Endothelial cell of umbilical vein (primary cell): ENCODE measurements at regions of chr3 and their contacts with region 1.

Region 1: DNA sequence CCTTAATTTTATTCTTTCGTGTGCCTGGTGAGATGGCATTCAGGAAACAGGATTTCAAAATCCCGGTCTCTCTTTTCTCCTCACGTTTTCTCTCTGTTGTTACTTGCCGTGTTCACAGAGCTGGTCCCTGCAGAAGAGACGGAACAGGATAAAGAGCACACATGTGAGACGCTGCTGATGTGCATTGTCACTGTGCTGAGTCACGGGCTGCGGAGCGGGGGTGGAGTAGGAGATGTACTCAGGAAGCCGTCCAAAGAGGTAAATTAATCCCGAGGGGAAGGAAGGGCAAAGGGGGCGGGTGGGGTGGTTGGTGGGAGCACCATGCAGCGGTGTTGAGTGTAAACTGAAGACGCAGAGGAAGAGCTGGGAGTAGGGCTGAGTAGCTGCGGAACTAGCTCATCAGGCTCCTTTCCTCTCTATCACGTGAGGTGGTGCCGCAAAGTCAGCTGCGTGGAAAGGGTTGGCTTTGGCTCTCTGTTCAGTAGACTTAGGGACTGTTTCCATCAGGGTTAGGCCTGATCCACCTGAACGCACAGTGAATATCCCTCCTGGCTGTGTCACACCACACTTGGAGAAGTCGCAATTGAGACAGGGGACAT is 164.8 kb upstream of the BHLHE40 start:
- DNase-seq: peak; percentile 85
- H3K4me3 ChIP-seq: no peak overlapping the region
- H3K27ac ChIP-seq: peak overlapping the region; percentile 74
- H3K4me1 ChIP-seq: peaks cover 18% of the 10 kb centered on the region
- H3K27me3 ChIP-seq: no peaks in the 10 kb centered on the region
- CTCF ChIP-seq: no peak
- POLR2A ChIP-seq: no peak

Region 2: GRCh38 chr3:4826237-4827100 is 12.1 kb after region 1 on chr3:
- CTCF ChIA-PET with region 1: interaction called, 10 read pairs
- POLR2A ChIA-PET with region 1: interaction called, 3 read pairs
- dilution Hi-C with region 1: no loop called
- intact Hi-C with region 1: loop called (anchors 1 kb)
- DNase-seq: peak; percentile 49
- H3K4me3 ChIP-seq: no peak overlapping the region
- H3K27ac ChIP-seq: no peak overlapping the region
- H3K4me1 ChIP-seq: peaks cover 31% of the 10 kb centered on the region
- H3K27me3 ChIP-seq: no peaks in the 10 kb centered on the region
- CTCF ChIP-seq: no peak
- POLR2A ChIP-seq: no peak

Region 3: DNA sequence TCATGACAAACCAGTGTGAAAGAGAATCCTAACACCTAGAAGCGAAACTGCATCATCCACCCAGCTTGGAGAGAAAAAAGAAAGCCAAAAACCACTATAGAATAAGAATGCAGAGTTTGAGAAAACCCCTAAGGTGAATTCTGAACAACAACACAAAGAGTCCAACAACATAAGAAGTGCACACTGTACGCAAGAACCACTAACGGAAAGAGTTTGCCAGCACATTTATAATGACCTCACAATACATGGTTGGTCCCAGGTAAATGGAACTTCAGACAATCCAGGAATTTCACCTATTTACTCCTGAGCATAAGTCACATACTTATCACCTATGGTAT is 36.5 kb after region 1 on chr3:
- CTCF ChIA-PET with region 1: no interaction called
- POLR2A ChIA-PET with region 1: no interaction called
- dilution Hi-C with region 1: no loop called
- intact Hi-C with region 1: loop called (anchors 1 kb)
- DNase-seq: no peak
- H3K4me3 ChIP-seq: no peak overlapping the region
- H3K27ac ChIP-seq: no peak overlapping the region
- H3K4me1 ChIP-seq: peaks cover 32% of the 10 kb centered on the region
- H3K27me3 ChIP-seq: no peaks in the 10 kb centered on the region
- CTCF ChIP-seq: no peak
- POLR2A ChIP-seq: no peak